ENCODE measurements at regions of chr5 and their contacts with region 1.

Region 1: DNA sequence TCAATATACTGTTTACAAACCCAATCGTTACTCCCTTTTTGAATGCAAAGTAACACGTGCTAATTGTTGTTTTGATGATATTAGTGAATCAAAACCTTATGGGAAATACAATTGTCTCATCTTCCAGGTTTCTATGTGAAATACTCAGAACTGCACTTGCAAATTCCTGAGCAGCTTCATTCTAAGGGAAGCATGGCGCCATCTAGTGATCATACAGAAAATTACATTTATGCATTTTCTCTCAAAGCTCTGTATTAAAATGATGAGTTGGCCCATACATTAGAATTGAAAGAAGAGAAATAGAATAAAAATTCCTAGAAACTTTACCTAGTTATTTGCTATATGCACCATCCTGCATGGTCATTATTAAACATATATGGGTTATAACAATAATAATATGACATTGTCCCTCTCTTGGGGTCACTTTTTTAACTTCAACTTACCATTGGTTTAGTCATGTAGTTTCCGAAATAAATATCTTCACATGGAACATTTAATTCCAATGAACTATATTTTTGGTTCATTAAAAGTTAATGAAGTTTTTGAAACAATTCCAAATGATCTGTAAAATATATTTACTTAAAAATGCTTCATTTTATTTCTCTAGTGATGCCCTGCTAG is 220.0 kb downstream of the PDE4D start:
- DNase-seq: no peak
- H3K4me3 ChIP-seq: no peak overlapping the region
- H3K27me3 ChIP-seq: no peaks in the 10 kb centered on the region
- CTCF ChIP-seq: peak; percentile 77

Region 2: DNA sequence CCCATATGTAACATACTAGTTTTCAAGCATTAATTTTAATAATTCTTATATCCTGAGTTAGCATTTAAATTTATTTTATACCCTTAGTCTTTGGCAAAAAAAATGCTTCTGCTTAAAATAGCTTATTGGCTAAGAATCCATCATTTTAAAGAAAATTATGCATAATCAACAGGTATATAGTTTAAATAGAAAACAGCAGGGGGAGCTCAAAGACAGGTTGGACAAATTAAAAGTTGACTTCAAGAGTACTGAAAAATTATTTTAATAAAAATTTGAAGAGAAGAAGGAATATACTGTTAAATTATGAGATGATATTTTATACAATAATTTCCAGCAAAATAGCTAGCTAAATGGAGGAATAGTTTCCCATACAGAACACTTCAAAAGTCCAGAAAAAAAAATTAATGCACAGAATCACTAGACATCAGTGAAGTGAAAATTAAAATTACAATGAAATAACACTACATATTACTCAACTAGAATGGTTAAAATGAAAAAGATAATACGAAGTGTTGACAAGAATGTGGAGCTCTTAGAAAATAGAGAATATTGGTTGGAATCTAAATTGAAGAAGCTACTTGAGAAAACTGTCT is 167.2 kb before region 1 on chr5:
- CTCF ChIA-PET with region 1: interaction called, 37 read pairs
- POLR2A ChIA-PET with region 1: no interaction called
- DNase-seq: no peak
- H3K4me3 ChIP-seq: no peak overlapping the region
- H3K27me3 ChIP-seq: no peaks in the 10 kb centered on the region
- CTCF ChIP-seq: peak; percentile 26; the same call in 1 of the 2 replicates

Region 3: DNA sequence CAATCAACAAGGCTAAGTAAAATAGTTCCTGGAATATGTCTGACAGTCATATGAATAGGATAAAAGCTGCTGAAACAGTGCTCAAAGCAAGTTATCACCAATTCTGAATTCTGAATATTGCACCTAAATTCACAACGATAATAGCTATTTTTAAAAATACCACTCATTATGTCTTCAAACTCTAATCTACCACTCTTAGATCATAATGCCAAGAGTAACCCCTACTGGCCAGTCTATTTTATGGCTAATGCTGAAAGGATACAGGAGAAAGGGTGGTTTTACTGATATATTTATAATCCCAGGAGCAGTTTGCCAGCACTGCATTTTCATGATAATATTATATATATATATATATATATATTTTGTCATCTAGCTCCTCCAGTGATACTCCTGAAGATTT is 12.8 kb before region 1 on chr5:
- CTCF ChIA-PET with region 1: interaction called, 22 read pairs
- POLR2A ChIA-PET with region 1: no interaction called
- DNase-seq: no peak
- H3K4me3 ChIP-seq: no peak overlapping the region
- H3K27me3 ChIP-seq: no peaks in the 10 kb centered on the region
- CTCF ChIP-seq: peak; percentile 38; the same call in 1 of the 2 replicates

Region 4: GRCh38 chr5:59684388-59685190 is 11.0 kb after region 1 on chr5:
- CTCF ChIA-PET with region 1: interaction called, 11 read pairs
- POLR2A ChIA-PET with region 1: no interaction called
- DNase-seq: no peak
- H3K4me3 ChIP-seq: no peak overlapping the region
- H3K27me3 ChIP-seq: no peaks in the 10 kb centered on the region
- CTCF ChIP-seq: no peak

Region 5: GRCh38 chr5:59799668-59800346 is 126.3 kb after region 1 on chr5:
- CTCF ChIA-PET with region 1: interaction called, 14 read pairs
- POLR2A ChIA-PET with region 1: no interaction called
- DNase-seq: no peak
- H3K4me3 ChIP-seq: no peak overlapping the region
- H3K27me3 ChIP-seq: peaks cover under 1% of the 10 kb centered on the region; the same call in 1 of the 2 replicates
- CTCF ChIP-seq: peak; percentile 60